ENCODE measurements at regions of chr3 and their contacts with region 1.

Region 1: GRCh38 chr3:141000027-141000663 is 51.0 kb upstream of the SPSB4 start:
- DNase-seq: peak; percentile 60 to 66 (median 63)
- ATAC-seq: peak; percentile 87 to 96 (median 95)
- H3K4me3 ChIP-seq: no peak overlapping the region
- H3K27ac ChIP-seq: no peak overlapping the region
- H3K4me1 ChIP-seq: no peaks in the 10 kb centered on the region
- H3K27me3 ChIP-seq: no peaks in the 10 kb centered on the region
- CTCF ChIP-seq: peak; percentile 46 to 75 (median 68)
- POLR2A ChIP-seq: no peak

Region 2: GRCh38 chr3:141105828-141106628 is 105.9 kb after region 1 on chr3:
- intact Hi-C with region 1: loop called in 1 of 2 experiments (anchors 10 kb)
- DNase-seq: peak in 1 of 3 donors; percentile 69
- ATAC-seq: peak; percentile 78 to 89 (median 82)
- H3K4me3 ChIP-seq: no peak overlapping the region
- H3K27ac ChIP-seq: no peak overlapping the region
- H3K4me1 ChIP-seq: no peaks in the 10 kb centered on the region
- H3K27me3 ChIP-seq: no peaks in the 10 kb centered on the region
- CTCF ChIP-seq: peak; percentile 74 to 84 (median 81)
- POLR2A ChIP-seq: no peak